ENCODE measurements at regions of chr7 and their contacts with region 1.

Region 1: GRCh38 chr7:101299511-101300464 is 21.8 kb downstream of the IFT22 start:
- DNase-seq: no peak
- H3K4me3 ChIP-seq: no peak overlapping the region
- H3K4me1 ChIP-seq: peaks cover 1% of the 10 kb centered on the region
- H3K27me3 ChIP-seq: no peaks in the 10 kb centered on the region

Region 2: DNA sequence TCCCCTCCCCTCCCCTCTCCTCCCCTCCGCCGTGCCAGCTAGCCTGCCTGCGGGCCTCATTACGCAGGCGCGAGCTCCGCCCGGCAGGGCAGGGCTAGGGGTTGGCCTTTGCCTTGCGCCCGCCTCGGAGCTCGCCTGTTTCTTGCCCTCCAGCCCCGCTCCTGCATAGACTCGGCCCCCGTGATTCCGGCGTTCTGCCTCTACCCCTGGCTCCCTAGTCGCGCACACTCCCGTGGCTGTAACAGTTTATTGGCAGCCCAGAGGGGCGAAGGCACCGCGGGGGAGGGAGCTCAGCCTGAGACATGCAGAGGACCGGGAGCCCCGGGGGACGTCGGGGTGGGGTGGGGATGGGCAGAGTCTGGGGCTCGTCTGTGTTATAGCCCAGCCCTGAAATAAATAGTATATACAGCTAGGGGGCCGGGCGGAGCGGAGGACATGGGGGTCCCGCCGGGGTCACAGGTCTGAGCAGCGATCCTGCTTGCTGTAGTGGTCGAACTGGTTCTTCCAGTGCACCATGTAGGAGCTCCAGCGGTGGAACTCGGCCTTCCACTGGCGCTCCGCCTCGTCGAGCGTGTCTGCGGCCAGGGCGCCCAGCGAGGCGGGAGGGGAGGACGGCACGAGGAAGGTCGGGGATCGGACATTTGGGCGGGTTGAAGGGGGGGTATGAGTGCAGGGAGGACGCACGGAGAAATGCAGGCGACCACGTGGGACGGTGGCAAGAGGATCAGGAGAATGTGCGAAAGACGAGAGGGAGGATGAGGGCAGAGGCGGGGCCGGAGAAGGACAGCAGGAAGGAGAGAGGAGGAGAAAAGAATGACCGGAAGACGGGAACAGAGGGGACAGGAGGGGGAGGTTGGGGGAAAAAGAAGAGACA is 409.8 kb before region 1 on chr7:
- in situ Hi-C with region 1: loop called (anchors 10 kb)
- DNase-seq: peak; percentile 87 to 94
- H3K4me3 ChIP-seq: peak overlapping the region; percentile 59
- H3K4me1 ChIP-seq: peaks cover 15% of the 10 kb centered on the region
- H3K27me3 ChIP-seq: no peaks in the 10 kb centered on the region

Region 3: DNA sequence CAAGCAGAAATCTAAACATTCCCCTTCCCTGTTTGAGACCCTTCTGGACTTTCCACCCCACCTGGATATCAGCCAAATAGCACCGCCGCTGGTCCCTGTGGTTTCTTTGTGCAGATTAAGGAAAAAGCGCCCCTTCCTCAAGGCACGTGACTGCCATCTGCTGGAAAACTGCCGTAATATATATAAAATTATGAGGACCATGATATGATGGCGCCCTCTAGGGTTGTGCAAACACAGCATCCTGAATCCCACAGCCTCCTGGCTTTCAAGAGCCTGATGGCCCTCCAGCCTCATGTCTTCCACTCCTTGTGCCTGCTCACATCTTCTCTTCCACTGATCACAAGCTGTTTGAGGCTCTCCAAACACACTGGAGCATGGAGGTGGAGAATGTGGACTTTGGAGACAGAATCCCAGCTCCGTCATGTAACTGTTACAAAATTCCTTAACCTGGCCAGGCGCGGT is 208.0 kb after region 1 on chr7:
- in situ Hi-C with region 1: no loop called
- DNase-seq: peak; percentile 78 to 86
- H3K4me3 ChIP-seq: no peak overlapping the region
- H3K4me1 ChIP-seq: no peaks in the 10 kb centered on the region
- H3K27me3 ChIP-seq: no peaks in the 10 kb centered on the region

Measured in HAP-1 (cell line).